ENCODE measurements at regions of chr1 and their contacts with region 1.

Region 1: GRCh38 chr1:222095606-222096475 is 354.0 kb upstream of the DUSP10 start:
- DNase-seq: peak in 1 of 2 donors; percentile 19
- ATAC-seq: peak in 1 of 8 donors; percentile 42
- H3K4me3 ChIP-seq: no peak overlapping the region
- H3K27ac ChIP-seq: no peak overlapping the region
- H3K4me1 ChIP-seq: peaks cover 0 to 15% (median 0%) of the 10 kb centered on the region in 9 donors
- H3K27me3 ChIP-seq: peaks cover 0 to 6% (median 0%) of the 10 kb centered on the region in 7 donors
- CTCF ChIP-seq: peak; percentile 51 to 94 (median 78)

Region 2: GRCh38 chr1:222117809-222118208 is 22.0 kb after region 1 on chr1:
- intact Hi-C with region 1: loop called in 1 of 10 experiments (anchors 2 kb)
- DNase-seq: no peak
- ATAC-seq: no peak
- H3K4me3 ChIP-seq: no peak overlapping the region
- H3K27ac ChIP-seq: no peak overlapping the region
- H3K4me1 ChIP-seq: no peaks in the 10 kb centered on the region
- H3K27me3 ChIP-seq: peaks cover 0 to 4% (median 0%) of the 10 kb centered on the region in 7 donors
- CTCF ChIP-seq: no peak